ENCODE measurements at regions of chr20 and their contacts with region 1.

Region 1: DNA sequence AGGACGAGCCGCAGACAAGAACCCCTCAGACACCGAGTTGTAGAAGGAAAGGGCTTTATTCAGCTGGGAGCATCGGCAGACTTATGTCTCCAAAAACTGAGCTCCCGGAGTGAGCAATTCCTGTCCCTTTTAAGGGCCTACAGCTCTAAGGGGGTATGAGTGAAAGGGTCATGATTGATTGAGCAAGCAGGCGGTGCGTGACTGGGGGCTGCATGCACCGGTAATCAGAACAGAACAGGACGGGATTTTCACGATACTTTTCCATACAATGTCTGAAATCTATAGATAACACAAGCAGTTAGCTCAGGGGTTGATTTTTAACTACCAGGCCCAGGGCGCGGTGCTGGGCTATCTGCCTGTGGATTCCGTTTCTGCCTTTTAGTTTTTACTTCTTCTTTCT is 226.4 kb upstream of the PLCB4 start:
- DNase-seq: no peak
- H3K4me3 ChIP-seq: no peak overlapping the region
- H3K27ac ChIP-seq: no peak overlapping the region
- H3K4me1 ChIP-seq: no peaks in the 10 kb centered on the region
- H3K27me3 ChIP-seq: no peaks in the 10 kb centered on the region
- CTCF ChIP-seq: no peak
- EP300 ChIP-seq: no peak
- POLR2A ChIP-seq: no peak
- RAD21 ChIP-seq: no peak

Region 2: GRCh38 chr20:8829256-8829655 is 13.3 kb before region 1 on chr20:
- CTCF ChIA-PET with region 1: interaction called, 11 read pairs
- POLR2A ChIA-PET with region 1: no interaction called
- DNase-seq: no peak
- H3K4me3 ChIP-seq: no peak overlapping the region
- H3K27ac ChIP-seq: no peak overlapping the region
- H3K4me1 ChIP-seq: no peaks in the 10 kb centered on the region
- H3K27me3 ChIP-seq: no peaks in the 10 kb centered on the region
- CTCF ChIP-seq: peak; percentile 24 to 59 (median 52); a peak in 3 of 4 replicates
- EP300 ChIP-seq: no peak
- POLR2A ChIP-seq: no peak
- RAD21 ChIP-seq: peak in 1 of 2 experiments; percentile 18; a peak in 1 of 4 replicates

Region 3: GRCh38 chr20:8853805-8854338 is 11.3 kb after region 1 on chr20:
- CTCF ChIA-PET with region 1: interaction called, 10 read pairs
- POLR2A ChIA-PET with region 1: no interaction called
- DNase-seq: no peak
- H3K4me3 ChIP-seq: no peak overlapping the region
- H3K27ac ChIP-seq: no peak overlapping the region
- H3K4me1 ChIP-seq: peaks cover 0 to 3% (median 0%) of the 10 kb centered on the region in 4 experiments; a peak in 2 of 7 replicates
- H3K27me3 ChIP-seq: no peaks in the 10 kb centered on the region
- CTCF ChIP-seq: peak in 2 of 3 experiments; percentile 74 to 90; a peak in 3 of 4 replicates
- EP300 ChIP-seq: no peak
- POLR2A ChIP-seq: no peak
- RAD21 ChIP-seq: peak; percentile 91 to 92

Measured in H1 (cell line).